Activated CD4-positive, alpha-beta T cell treated with anti-CD3 and anti-CD28 coated beads for 36 hours (primary cell): ENCODE measurements at regions of chr2 and their contacts with region 1.

Region 1: DNA sequence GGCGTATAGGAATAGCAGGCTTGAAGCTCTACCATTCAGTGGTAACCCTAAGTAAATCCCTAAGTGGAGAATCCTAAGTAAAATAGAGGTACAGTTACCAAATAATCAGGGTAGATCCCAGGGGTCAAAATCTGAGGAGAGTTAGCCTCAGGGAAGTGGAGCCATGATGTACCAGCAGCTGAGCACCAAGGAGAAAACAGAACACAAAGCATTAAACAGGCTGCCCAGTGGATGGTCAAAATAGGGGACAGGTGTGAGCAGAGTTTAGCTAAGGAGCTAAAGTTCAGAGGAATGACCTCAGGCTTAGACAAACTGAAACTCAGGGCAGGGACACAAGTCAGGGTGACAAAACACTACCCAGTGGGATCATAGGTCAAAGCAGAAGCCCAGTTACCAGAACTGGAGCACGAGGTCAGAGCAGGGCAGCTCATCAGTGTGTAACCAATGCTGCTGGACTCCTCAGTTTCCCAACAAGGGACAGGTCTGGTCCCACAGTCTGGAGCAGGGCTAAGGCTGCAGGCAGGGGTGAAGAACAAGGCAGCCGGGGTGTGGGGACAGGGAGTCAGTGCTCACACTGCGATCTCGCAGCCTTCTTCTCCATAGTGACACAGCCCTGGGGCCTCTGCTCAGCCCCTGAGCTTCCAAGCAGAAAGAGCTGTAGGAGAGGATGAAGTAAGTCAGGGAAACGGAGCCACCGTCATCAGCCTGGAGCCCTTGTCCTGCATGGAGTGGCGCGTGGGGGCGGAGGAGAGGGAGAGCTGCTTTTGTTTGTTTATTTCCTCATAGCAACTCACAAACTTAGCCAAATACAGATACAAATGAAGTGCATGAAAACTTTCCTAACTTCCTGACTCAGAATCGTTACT is 264.0 kb downstream of the MREG start:
- DNase-seq: no peak
- ATAC-seq: no peak
- H3K4me3 Mint-ChIP-seq: no peak overlapping the region
- H3K27ac Mint-ChIP-seq: no peak overlapping the region
- H3K4me1 Mint-ChIP-seq: peaks cover 54% of the 10 kb centered on the region
- H3K27me3 Mint-ChIP-seq: peaks cover 7% of the 10 kb centered on the region

Region 2: GRCh38 chr2:215680605-215681598 is 68.4 kb before region 1 on chr2:
- CTCF ChIA-PET with region 1: no interaction called
- POLR2A ChIA-PET with region 1: interaction called, 4 read pairs
- intact Hi-C with region 1: loop called (anchors 5 kb)
- DNase-seq: peak; percentile 54
- ATAC-seq: peak; percentile 87
- H3K4me3 Mint-ChIP-seq: peak overlapping the region; percentile 3
- H3K27ac Mint-ChIP-seq: peak overlapping the region; percentile 75
- H3K4me1 Mint-ChIP-seq: peaks cover 38% of the 10 kb centered on the region
- H3K27me3 Mint-ChIP-seq: no peaks in the 10 kb centered on the region